Right ventricle myocardium inferior (tissue), 1 donor: ENCODE measurements at regions of chr21 and their contacts with region 1.

Region 1: DNA sequence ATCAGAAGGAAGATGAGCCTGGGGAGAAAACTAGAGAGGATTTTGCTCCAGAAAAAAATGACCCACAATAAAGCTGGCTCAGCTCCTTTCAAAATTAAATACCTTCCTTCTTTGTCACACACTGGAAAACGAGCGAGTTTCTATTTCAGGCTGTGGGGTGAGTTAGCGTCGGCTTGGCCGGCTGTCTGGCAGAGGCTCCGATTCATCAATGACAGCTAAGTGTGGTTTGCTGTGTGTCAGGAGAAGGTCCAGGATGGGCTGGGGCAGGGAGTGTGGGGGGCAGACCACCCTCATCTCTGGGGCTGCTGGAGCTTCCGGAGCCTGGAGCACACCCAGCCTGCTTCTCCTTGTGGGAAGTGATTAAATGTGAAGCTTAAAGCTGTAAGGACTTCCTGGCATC is 120.2 kb downstream of the ETS2 start:
- DNase-seq: no peak
- ATAC-seq: peak; percentile 81

Region 2: DNA sequence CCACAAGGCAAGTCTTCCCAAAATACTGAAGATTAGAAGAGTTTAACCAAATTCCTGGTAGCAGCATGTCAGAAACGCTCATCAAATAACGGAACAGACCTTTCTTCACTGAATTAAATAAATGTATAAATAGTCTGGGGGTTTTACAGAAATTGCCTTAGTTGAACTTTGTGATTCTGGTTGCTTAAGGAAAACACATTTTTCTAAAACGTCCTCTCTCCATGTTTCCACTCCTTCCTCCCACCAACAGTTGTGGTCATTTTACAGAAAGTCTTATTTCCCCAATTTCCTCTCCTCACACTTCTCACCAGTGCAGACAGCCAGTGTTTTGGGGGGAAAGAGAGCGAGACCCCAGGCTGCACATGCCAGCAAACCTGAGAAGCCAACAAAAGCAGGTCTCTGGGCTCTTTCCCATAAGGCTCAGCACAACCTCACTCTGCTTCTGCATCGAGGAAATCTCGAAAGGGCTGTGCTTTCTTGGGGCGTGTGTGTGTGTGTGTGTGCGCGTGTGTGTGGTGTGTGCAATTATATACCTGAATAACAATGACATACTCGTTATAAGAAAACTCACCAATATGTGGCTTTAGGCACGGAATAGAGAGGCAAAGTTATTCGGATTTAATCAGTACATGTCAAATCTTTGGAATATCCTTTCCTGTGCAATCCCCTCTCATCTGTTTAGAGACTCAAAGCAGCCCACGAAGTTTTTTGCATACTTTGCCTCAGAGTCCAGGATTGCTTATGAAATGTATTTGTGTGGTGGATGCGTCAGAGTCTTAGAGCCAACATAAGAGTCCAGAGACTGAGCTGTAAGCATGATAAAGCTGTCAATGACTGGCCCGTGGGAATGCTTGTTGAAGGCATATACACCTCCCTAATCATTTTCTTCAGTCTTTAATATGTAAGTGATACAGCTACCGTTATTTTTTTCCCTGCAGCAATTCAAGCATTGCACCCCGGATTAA is 667.1 kb before region 1 on chr21:
- intact Hi-C with region 1: no loop called
- DNase-seq: no peak
- ATAC-seq: no peak

Region 3: DNA sequence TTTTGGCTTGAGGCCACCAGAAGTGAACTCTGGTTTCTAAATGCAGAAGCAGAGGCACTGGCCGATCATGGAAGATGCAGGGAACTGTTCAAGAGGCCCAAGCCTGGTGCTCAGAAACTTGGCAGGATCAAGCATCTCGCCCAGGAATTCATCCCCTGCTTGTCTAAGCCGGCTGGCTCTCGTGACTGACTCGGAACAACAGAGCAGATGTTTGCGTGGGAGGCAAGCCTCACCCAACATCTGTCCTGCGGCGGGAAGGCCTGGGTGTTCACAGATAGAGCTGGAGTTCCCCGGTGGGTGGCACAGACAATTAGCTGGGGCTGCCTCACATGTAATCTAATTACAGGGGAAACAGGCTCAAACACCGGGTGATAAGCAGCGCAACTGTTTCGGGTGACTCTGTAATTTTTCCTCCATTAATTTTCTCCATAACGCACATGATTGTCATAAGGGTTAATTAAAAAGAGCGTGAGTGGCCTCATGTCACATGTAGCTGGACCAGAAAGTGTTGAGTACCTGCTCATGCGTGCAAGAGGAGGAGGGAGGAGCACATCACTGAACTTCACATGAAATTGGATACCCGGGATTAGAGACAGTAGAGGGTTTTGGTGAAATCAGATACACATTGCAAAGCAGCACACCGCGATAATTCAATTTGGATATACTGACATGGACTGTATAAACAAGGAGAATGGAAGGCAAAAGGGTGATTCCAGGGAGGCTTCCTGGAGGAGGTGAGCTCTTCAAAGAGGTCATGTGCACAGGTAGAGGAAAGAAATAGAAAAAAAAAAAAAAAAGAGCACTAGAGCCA is 59.9 kb after region 1 on chr21:
- intact Hi-C with region 1: loop called (anchors 5 kb)
- DNase-seq: peak; percentile 85
- ATAC-seq: peak; percentile 72

Region 4: DNA sequence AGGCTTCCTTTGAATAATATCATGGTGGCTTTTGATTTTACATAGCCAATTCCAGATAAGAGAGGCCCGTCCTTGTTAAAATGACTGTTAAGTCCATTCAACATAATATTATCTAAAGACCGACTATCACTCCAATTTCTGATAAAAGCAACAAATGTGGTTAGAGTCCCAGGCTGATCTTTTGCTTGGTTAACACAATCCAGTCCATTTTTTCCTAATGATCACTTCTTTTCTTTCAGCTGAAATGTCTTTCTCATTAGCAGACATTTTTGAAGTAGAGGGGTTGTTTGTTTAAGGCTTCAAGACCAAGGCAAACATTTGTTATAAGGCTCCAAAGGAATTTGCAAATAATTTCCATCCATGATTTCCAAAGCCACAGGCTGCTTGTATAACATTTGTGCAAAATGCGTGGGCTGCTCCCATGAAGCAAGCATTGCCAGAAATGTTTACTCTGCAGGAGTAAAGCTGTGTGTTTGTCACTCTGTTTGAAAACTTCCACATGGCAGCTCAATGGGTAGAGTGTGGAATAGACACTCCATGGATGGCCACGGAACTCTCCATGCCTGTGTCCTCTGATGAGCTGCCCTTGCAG is 145.8 kb after region 1 on chr21:
- intact Hi-C with region 1: no loop called
- DNase-seq: no peak
- ATAC-seq: peak; percentile 31